A673 (cell line): ENCODE measurements at regions of chr11 and their contacts with region 1.

Region 1: GRCh38 chr11:21511835-21512440 is 680.9 kb upstream of the ANO5 start:
- DNase-seq: peak; percentile 85
- H3K4me3 ChIP-seq: no peak overlapping the region
- H3K27ac ChIP-seq: no peak overlapping the region
- H3K4me1 ChIP-seq: no peaks in the 10 kb centered on the region
- H3K27me3 ChIP-seq: no peaks in the 10 kb centered on the region
- CTCF ChIP-seq: peak; percentile 82

Region 2: DNA sequence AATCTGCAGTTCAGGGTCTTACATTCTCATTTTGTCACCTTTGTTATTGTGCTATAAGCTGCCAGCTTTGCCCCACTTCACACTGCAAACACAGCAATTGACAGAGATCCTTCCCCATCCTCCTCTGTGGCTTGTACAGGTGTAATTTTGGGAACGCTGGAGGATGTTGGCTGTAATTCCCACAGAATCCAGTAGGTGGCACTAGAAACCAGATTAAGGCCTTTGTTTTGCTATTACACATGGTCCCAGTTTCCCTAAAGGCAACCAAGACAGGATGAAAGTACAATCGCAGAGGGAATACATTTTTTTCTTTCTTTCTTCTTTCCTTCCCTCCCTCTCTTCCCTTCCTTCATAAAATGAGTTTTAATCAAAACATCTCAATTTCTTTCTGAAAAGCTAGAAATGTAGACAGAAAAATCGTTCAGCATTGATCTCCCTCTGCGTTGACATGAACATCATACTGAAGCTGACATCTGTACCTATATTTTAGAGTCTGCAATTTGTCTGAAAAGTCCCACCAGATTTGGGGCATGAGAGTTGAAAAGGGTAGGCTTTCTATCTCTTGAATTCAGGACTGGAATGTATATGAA is 863.9 kb before region 1 on chr11:
- CTCF ChIA-PET with region 1: no interaction called
- POLR2A ChIA-PET with region 1: no interaction called
- intact Hi-C with region 1: loop called (anchors 5 kb)
- DNase-seq: peak; percentile 55
- H3K4me3 ChIP-seq: no peak overlapping the region
- H3K27ac ChIP-seq: no peak overlapping the region
- H3K4me1 ChIP-seq: no peaks in the 10 kb centered on the region
- H3K27me3 ChIP-seq: no peaks in the 10 kb centered on the region
- CTCF ChIP-seq: peak; percentile 77

Region 3: GRCh38 chr11:21142007-21142406 is 369.9 kb before region 1 on chr11:
- CTCF ChIA-PET with region 1: no interaction called
- POLR2A ChIA-PET with region 1: no interaction called
- intact Hi-C with region 1: loop called (anchors 2 kb)
- DNase-seq: peak; percentile 48
- H3K4me3 ChIP-seq: no peak overlapping the region
- H3K27ac ChIP-seq: no peak overlapping the region
- H3K4me1 ChIP-seq: no peaks in the 10 kb centered on the region
- H3K27me3 ChIP-seq: no peaks in the 10 kb centered on the region
- CTCF ChIP-seq: peak; percentile 50; the same call in 1 of the 2 replicates